Activated naive CD4-positive, alpha-beta T cell treated with anti-CD3 and anti-CD28 coated beads for 36 hours (primary cell): ENCODE measurements at regions of chr16 and their contacts with region 1.

Region 1: DNA sequence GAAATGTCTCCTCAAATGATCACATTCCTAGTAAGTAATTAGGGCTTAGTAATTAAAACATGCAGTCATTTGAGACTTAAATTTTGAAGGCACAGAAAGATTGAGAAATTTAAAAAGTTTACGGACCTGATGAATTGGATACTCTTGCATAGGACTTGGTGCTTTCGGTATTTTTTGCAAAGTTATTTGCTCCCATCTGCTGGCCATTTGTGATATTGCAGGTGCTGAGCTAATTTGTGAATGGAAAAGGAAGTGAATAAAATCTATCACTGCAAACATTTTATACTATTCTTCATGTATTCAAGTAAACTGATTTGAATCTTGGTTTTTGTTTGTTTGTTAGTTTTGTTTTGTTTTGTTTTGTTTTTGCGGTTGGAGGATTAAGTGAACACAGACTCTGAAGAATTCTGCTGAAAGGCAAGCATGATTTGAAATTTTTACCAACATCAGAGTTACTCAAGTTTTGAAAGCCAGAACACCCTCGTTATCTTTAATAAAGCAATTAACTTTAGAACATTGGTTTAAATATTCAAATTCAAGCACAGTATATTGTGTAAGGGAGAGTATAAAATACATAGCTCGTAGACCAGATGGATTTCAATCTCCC is 689.5 kb upstream of the RBFOX1 start:
- DNase-seq: peak; percentile 74
- H3K4me3 Mint-ChIP-seq: no peak overlapping the region
- H3K27ac Mint-ChIP-seq: no peak overlapping the region
- H3K4me1 Mint-ChIP-seq: peaks cover 8% of the 10 kb centered on the region
- H3K27me3 Mint-ChIP-seq: peaks cover 10% of the 10 kb centered on the region

Region 2: DNA sequence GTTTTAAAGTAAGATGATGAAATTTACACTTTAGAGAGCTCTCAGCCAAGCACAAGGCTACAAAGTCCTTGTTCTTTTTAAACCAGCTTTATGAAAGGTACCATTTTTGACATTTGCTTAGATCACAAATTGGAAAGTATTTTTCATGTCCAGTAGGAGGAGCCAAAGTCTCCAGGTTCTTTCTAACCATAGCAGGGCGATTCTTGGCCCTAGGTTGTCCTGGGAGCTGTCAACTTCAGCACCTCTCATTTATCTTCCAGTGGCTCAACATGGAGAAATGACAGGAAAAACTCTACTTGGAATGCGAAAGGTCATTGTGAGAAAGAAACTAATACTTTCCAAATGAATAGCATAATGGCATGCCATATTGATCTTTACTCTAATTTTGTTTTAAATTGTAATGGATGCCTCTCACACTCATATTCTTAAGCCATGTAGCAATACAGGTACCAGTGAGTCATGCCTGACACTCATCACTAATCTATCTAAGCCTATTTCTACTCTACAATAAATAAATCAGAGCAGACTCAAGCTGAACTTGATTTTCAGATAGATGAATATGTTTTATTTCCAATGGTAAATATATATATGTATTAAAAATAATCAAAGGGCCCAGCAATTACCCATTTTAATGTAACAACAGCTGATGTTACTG is 626.5 kb before region 1 on chr16:
- CTCF ChIA-PET with region 1: interaction called, 4 read pairs
- intact Hi-C with region 1: loop called (anchors 5 kb)
- DNase-seq: no peak
- H3K4me3 Mint-ChIP-seq: no peak overlapping the region
- H3K27ac Mint-ChIP-seq: no peak overlapping the region
- H3K4me1 Mint-ChIP-seq: no peaks in the 10 kb centered on the region
- H3K27me3 Mint-ChIP-seq: peaks cover 15% of the 10 kb centered on the region

Region 3: DNA sequence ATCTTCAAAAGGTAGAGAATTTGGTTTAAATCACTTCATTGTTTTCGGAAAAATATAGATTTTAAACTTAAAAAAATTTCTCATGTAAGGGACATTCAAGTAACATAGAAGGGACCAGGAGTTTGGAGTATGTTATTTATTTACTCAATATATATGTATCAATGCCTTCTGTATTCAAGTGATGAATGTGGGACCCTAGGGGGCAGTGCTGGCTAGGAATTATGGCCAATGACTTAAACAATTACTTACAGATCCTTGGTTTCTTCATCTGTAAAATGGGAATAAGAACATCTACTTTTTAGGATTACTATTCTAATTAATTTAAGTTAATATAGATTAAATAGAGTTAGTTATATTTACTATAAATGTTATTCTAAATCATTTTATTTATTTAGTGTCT is 196.8 kb before region 1 on chr16:
- CTCF ChIA-PET with region 1: no interaction called
- intact Hi-C with region 1: loop called (anchors 10 kb)
- DNase-seq: peak; percentile 8
- H3K4me3 Mint-ChIP-seq: no peak overlapping the region
- H3K27ac Mint-ChIP-seq: no peak overlapping the region
- H3K4me1 Mint-ChIP-seq: no peaks in the 10 kb centered on the region
- H3K27me3 Mint-ChIP-seq: no peaks in the 10 kb centered on the region